HEK293T (cell line): ENCODE measurements at regions of chr14 and their contacts with region 1.

Region 1: GRCh38 chr14:24195191-24196070 is at the start of gene TM9SF1:
- DNase-seq: peak; percentile 90

Region 2: GRCh38 chr14:24179961-24180796 is 15.3 kb before region 1 on chr14:
- CTCF ChIA-PET with region 1: no interaction called
- POLR2A ChIA-PET with region 1: interaction called, 15 read pairs
- DNase-seq: no peak

Region 3: DNA sequence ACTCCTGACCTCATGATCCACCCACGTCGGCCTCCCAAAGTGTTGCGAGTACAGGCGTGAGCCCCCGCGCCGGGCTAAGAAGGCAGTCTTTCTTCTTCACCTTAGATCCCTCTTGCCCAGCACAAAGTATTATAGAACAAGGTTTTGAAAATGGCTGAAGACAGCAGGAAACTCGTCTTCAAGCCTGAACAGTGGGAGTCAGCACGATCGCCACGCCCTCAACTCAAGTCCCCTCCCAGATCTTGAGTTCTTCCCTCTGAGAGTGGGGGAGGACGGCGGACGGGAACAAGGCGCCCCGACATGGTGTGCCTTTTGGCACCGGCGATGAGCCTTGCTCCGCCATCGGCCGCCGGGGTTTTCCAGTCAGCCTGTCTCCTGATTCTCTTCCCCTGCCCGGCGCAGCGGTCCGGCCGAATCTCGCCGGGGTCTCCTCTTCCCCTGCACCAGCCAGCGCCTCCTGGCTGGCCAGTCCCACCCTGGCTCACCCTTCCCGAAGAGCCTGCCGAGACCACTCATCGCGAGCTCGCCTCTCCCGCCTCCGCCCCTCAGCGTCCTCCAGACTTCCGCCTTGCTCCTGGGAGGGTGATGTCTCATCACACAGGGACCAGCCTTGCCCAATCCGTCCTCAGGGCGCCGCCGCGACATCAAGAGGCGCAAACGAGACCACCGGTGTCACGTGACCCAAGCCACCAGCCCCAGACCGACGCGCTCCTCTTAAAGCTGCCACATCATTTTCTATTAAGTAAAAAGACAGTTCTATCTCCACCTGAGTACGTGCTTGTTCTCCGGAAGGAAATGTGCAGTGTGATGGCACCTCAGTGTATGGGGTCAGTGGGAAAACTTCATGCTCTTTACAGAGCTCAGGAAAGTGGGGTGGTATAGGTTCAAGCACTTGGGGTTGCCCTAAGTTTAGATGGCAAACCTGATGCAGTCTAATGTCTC is 17.8 kb after region 1 on chr14 and contains the start of gene CHMP4A:
- CTCF ChIA-PET with region 1: no interaction called
- POLR2A ChIA-PET with region 1: interaction called, 33 read pairs
- DNase-seq: peak; percentile 96

Region 4: GRCh38 chr14:24251880-24252288 is 56.5 kb after region 1 on chr14:
- CTCF ChIA-PET with region 1: no interaction called
- POLR2A ChIA-PET with region 1: no interaction called
- DNase-seq: no peak

Region 5: GRCh38 chr14:24262821-24263761 is 67.7 kb after region 1 on chr14 and contains the start of gene TGM1:
- CTCF ChIA-PET with region 1: no interaction called
- POLR2A ChIA-PET with region 1: no interaction called
- DNase-seq: no peak